WTC11 (cell line): ENCODE measurements at regions of chr2 and their contacts with region 1.

Region 1: GRCh38 chr2:200483729-200484198 is 26.1 kb downstream of the KCTD18 start:
- DNase-seq: peak; percentile 82
- ATAC-seq: peak; percentile 80
- H3K4me3 Mint-ChIP-seq: no peak overlapping the region
- H3K27ac Mint-ChIP-seq: no peak overlapping the region
- H3K4me1 Mint-ChIP-seq: peaks cover 38% of the 10 kb centered on the region
- H3K27me3 Mint-ChIP-seq: no peaks in the 10 kb centered on the region
- CTCF ChIP-seq: no peak

Region 2: GRCh38 chr2:199973703-199974102 is 510.1 kb before region 1 on chr2:
- CTCF ChIA-PET with region 1: interaction called, 43 read pairs
- POLR2A ChIA-PET with region 1: no interaction called
- DNase-seq: no peak
- ATAC-seq: peak; percentile 84
- H3K4me3 Mint-ChIP-seq: no peak overlapping the region
- H3K27ac Mint-ChIP-seq: no peak overlapping the region
- H3K4me1 Mint-ChIP-seq: peaks cover 8% of the 10 kb centered on the region
- H3K27me3 Mint-ChIP-seq: no peaks in the 10 kb centered on the region
- CTCF ChIP-seq: peak; percentile 31; the same call in 1 of the 2 replicates

Region 3: DNA sequence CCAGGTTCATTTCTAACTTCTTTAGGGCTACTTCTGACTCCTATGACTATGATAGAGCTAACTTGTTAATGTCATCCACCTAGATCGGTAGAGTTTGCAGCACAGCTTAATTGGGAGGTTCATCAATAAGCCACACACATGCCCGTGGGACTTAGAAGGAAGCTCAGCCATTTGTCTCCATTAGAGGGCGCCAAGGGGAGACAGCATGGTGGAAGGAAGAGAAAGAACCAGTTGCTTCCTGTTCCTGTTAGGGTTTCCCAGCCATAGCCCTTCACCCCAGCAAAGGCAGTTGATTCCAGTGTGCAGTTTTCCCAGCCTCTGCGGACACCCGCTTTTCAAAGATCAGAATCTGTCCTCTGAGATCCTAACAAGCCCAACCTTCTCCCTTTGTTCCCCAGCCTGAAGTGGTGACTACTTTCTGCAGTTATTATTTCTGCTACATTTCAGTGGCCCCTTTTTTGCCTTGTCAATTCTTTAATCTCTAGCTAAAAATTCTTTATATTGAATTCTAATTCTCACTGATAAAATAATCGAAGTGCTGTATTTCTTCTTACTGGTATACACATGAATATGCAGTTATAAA is 498.0 kb before region 1 on chr2:
- CTCF ChIA-PET with region 1: interaction called, 21 read pairs
- POLR2A ChIA-PET with region 1: no interaction called
- DNase-seq: peak; percentile 79
- ATAC-seq: peak; percentile 78
- H3K4me3 Mint-ChIP-seq: no peak overlapping the region
- H3K27ac Mint-ChIP-seq: no peak overlapping the region
- H3K4me1 Mint-ChIP-seq: peaks cover 37% of the 10 kb centered on the region
- H3K27me3 Mint-ChIP-seq: no peaks in the 10 kb centered on the region
- CTCF ChIP-seq: peak; percentile 40; the same call in 1 of the 2 replicates

Region 4: DNA sequence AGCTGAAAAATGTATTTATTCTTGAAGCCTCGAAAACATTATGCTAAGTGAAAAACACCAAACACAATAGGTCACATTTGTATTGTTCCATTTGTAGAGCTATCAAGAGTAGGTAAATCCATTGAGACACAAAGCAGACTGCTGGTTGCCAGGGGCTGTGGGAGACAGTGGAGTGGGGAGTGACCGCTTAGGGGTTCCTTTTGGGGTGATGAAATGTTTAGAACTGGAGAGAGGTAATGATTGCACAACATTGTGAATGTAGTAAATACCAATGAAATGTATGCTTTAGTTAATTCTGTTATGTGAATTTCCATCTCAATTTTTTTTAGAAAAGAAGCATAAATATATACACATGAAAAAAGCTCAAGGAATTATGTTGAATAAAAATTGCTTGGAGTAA is 10.3 kb after region 1 on chr2:
- CTCF ChIA-PET with region 1: interaction called, 40 read pairs
- POLR2A ChIA-PET with region 1: interaction called, 5 read pairs
- DNase-seq: no peak
- ATAC-seq: no peak
- H3K4me3 Mint-ChIP-seq: no peak overlapping the region
- H3K27ac Mint-ChIP-seq: no peak overlapping the region
- H3K4me1 Mint-ChIP-seq: no peaks in the 10 kb centered on the region
- H3K27me3 Mint-ChIP-seq: no peaks in the 10 kb centered on the region
- CTCF ChIP-seq: no peak

Region 5: GRCh38 chr2:200585730-200586643 is 102.2 kb after region 1 on chr2 and contains the start of gene AOX1:
- CTCF ChIA-PET with region 1: interaction called, 10 read pairs
- POLR2A ChIA-PET with region 1: no interaction called
- DNase-seq: peak; percentile 77
- ATAC-seq: peak; percentile 86
- H3K4me3 Mint-ChIP-seq: peak within 1 kb of the TSS; percentile 83
- H3K27ac Mint-ChIP-seq: peak within 1 kb of the TSS; percentile 74; the same call in 1 of the 2 replicates
- H3K4me1 Mint-ChIP-seq: peaks cover 10% of the 10 kb centered on the region
- H3K27me3 Mint-ChIP-seq: peaks cover 24% of the 10 kb centered on the region
- CTCF ChIP-seq: no peak
- total RNA-seq, gene AOX1: 3.6 to 5.4 TPM (median 4.8 TPM) in 3 replicates

Region 6: GRCh38 chr2:200735061-200735460 is 251.3 kb after region 1 on chr2:
- CTCF ChIA-PET with region 1: interaction called, 38 read pairs
- POLR2A ChIA-PET with region 1: no interaction called
- DNase-seq: no peak
- ATAC-seq: no peak
- H3K4me3 Mint-ChIP-seq: no peak overlapping the region
- H3K27ac Mint-ChIP-seq: no peak overlapping the region
- H3K4me1 Mint-ChIP-seq: peaks cover 39% of the 10 kb centered on the region
- H3K27me3 Mint-ChIP-seq: no peaks in the 10 kb centered on the region
- CTCF ChIP-seq: no peak